IMR-90 (cell line): ENCODE measurements at regions of chr9 and their contacts with region 1.

Region 1: GRCh38 chr9:38527504-38527903 is 92.9 kb downstream of the ANKRD18A start:
- DNase-seq: no peak
- ATAC-seq: no peak
- H3K4me3 ChIP-seq: no peak overlapping the region
- H3K27ac ChIP-seq: no peak overlapping the region
- H3K4me1 ChIP-seq: no peaks in the 10 kb centered on the region
- H3K27me3 ChIP-seq: peaks cover 1% of the 10 kb centered on the region; the same call in 1 of the 2 replicates
- CTCF ChIP-seq: no peak
- POLR2A ChIP-seq: no peak
- RAD21 ChIP-seq: no peak

Region 2: DNA sequence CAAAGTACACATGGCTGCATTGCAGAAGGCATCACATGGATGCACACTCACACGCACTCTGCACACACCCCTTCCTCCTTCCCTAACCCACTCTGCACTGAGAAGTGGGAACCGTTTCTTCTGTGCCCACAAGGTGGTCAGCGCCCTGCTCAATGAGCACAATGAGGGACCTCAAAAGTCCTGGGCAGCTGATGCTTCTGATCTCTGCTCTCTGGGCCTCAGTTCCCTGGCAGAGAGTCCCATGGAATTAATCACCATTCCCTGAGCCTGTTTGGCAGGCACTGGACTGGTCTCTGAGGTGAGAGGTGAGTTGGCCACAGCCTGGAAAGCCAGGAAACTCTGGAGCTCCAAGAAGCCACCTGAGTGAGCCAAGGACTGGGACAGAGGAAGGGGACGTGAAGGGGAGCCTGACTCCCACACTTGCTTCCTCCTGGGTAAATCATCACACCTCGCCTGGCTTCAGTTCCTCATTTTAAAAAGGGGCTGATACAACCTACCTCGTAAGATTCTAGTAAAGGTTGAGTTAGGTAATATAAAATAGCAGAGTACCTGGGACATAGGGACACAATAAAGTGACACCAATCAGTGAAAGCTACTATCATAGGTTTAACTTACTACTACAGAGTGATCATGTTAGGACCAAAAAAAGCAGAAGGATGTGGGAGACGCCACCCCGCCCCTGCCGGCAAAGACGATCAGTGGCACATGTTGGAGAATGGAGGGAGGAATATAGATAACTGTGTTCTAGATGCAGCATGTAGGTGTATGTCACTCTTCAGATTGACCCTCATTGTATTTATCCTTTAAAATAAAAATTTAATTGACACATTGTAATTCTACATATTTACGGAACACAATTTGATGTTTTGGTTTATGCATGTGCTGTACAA is 82.1 kb before region 1 on chr9:
- CTCF ChIA-PET with region 1: no interaction called
- POLR2A ChIA-PET with region 1: no interaction called
- dilution Hi-C with region 1: no loop called
- in situ Hi-C with region 1: no loop called
- intact Hi-C with region 1: loop called (anchors 5 kb)
- DNase-seq: no peak
- ATAC-seq: no peak
- H3K4me3 ChIP-seq: no peak overlapping the region
- H3K27ac ChIP-seq: no peak overlapping the region
- H3K4me1 ChIP-seq: peaks cover 2% of the 10 kb centered on the region; the same call in 1 of the 2 replicates
- H3K27me3 ChIP-seq: no peaks in the 10 kb centered on the region; the same call in 1 of the 2 replicates
- CTCF ChIP-seq: no peak
- POLR2A ChIP-seq: no peak
- RAD21 ChIP-seq: no peak

Region 3: DNA sequence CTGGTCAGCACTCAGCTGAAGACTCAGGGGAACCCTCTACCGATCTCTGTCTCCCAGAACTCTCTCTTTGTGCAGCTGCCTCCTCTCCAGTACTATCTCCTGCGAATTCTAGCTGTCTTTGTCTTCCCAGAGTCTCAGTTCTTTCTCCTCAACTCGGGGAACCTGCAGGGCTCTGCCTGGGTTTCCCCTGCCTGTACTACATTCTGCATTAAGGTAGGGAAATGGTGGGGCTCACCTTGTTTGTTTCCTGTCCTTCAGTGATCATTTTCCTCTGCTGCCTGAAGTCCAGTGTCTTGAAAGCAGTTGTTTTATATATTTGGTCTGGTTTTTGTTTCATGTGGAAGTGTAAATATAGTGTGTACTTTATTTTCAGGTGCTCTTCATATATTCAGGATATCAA is 60.1 kb before region 1 on chr9:
- CTCF ChIA-PET with region 1: no interaction called
- POLR2A ChIA-PET with region 1: no interaction called
- dilution Hi-C with region 1: no loop called
- in situ Hi-C with region 1: loop called (anchors 10 kb)
- intact Hi-C with region 1: no loop called
- DNase-seq: no peak
- ATAC-seq: no peak
- H3K4me3 ChIP-seq: no peak overlapping the region
- H3K27ac ChIP-seq: no peak overlapping the region
- H3K4me1 ChIP-seq: no peaks in the 10 kb centered on the region
- H3K27me3 ChIP-seq: peaks cover 5% of the 10 kb centered on the region
- CTCF ChIP-seq: no peak
- POLR2A ChIP-seq: no peak
- RAD21 ChIP-seq: no peak